GM10248 (cell line): ENCODE measurements at regions of chr3 and their contacts with region 1.

Region 1: GRCh38 chr3:133424937-133425869 is 25.3 kb downstream of the BFSP2 start:
- DNase-seq: no peak
- CTCF ChIP-seq: no peak

Region 2: DNA sequence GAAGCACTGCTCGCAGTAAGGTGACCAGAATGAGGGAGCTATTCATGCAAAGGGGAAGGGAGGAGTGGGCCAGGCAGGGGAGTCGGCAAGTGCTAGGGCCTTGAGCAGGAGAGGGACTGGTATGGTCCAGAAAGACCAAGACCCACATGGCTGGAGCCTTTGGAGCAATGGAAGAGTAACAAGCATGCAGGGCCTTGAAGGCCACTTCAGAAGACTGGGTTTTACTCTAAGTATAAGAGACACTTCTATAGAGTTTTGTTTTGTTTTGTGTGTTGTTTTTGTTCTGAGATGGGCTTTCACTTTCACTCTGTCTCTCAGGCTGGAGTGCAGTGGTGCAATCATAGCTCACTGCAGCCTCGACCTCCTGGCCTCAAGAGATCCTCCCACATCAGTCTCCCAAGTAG is 16.7 kb after region 1 on chr3:
- CTCF ChIA-PET with region 1: interaction called, 14 read pairs
- POLR2A ChIA-PET with region 1: interaction called, 8 read pairs
- DNase-seq: no peak
- CTCF ChIP-seq: no peak